ENCODE measurements at regions of chr2 and their contacts with region 1.

Region 1: DNA sequence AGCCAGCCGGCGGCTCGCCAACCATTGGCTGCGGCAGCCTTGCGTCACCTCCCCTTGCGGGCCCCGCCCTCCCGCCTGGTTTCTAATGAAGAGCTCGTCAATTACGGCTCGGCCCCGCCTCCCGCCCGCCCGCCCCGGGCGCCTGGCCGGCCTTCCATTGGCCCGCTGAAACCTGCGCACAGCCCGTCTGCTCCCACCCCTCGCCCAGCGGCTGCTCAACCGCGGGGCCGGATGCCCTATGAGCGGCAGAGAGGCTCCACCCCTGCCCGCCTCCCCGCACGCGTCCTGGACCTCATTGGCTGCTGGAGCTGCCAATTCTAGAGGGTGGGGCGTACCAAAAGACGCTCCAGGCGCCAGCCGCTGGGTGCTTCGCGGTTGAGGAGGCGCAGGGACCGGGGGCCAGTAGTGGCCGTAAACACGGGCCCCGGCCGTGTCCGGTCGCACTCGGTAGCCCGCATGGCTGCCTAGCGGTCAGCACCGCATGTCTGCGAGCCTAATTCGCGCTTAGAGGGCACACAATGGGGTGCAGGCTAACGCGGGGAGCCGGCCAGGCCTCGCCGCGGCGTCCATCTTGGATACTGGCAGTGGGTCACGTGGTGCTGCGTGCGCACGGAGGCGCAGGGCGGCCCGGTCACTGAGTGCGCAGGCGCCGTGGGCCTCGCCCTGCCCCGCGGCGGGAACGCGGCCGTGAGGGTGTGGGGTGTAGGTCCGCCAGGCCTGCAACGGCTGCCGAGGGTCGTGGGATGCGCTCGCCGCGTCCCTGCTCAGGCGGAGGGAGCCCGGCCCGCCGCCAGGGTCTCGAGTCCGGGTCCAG is 454 bp upstream of the HDAC4 start:
- DNase-seq: peak; percentile 98
- ATAC-seq: peak; percentile 96
- H3K4me3 ChIP-seq: peak overlapping the region; percentile 94
- H3K27ac ChIP-seq: peak overlapping the region; percentile 98
- H3K4me1 ChIP-seq: peaks cover 5% of the 10 kb centered on the region; the same call in 1 of the 2 replicates
- H3K27me3 ChIP-seq: no peaks in the 10 kb centered on the region
- CTCF ChIP-seq: no peak
- POLR2A ChIP-seq: peak; percentile 96
- RAD21 ChIP-seq: no peak

Region 2: DNA sequence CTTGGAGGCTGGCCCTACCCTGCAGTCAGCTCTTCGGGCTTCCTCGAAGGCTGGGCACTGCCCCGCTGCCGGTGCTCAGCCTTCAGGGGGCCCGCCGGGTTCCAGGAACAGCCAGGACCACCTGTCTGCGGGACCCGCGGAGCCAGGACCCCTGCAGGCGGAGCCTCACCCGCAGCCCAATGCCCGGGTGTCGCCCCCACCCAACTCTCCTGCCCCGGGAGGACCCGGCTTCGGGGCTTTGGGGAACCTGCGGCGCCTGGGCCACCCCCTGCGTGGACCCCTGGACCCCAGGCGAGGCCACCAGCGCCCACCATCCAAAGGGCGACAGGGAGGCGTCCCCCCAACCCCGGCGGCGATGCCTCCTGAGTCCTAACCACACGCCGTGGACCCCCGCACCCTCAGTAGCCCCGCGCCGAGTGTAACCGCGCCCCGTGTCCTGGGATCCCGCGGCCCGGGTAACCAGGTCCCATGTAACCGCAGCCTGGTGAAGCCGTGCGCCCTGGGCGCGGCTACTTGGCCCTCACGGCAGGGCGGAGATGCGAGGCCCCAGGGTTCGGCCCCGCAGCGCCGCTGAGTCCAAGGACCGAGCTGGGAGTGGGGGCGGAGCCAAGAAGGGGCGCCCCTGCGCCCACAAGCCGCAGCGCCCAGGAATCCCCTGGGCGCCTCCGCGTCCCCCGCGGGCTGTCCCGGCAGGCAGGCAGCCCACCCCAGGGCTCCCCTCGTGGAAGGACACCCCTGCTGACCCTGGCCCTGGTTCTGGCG is 1445.5 kb before region 1 on chr2:
- CTCF ChIA-PET with region 1: no interaction called
- POLR2A ChIA-PET with region 1: no interaction called
- dilution Hi-C with region 1: no loop called
- in situ Hi-C with region 1: no loop called
- intact Hi-C with region 1: no loop called
- DNase-seq: no peak
- ATAC-seq: peak; percentile 85
- H3K4me3 ChIP-seq: peak overlapping the region; percentile 24; the same call in 1 of the 2 replicates
- H3K27ac ChIP-seq: no peak overlapping the region
- H3K4me1 ChIP-seq: peaks cover 2% of the 10 kb centered on the region; the same call in 1 of the 2 replicates
- H3K27me3 ChIP-seq: peaks cover 23% of the 10 kb centered on the region
- CTCF ChIP-seq: no peak
- POLR2A ChIP-seq: no peak
- RAD21 ChIP-seq: no peak

Region 3: GRCh38 chr2:239035361-239036078 is 365.8 kb before region 1 on chr2:
- CTCF ChIA-PET with region 1: no interaction called
- POLR2A ChIA-PET with region 1: no interaction called
- dilution Hi-C with region 1: no loop called
- in situ Hi-C with region 1: no loop called
- intact Hi-C with region 1: loop called (anchors 10 kb)
- DNase-seq: no peak
- ATAC-seq: peak; percentile 99
- H3K4me3 ChIP-seq: no peak overlapping the region
- H3K27ac ChIP-seq: no peak overlapping the region
- H3K4me1 ChIP-seq: no peaks in the 10 kb centered on the region
- H3K27me3 ChIP-seq: peaks cover 12% of the 10 kb centered on the region
- CTCF ChIP-seq: peak; percentile 68
- POLR2A ChIP-seq: no peak
- RAD21 ChIP-seq: peak; percentile 74

Region 4: GRCh38 chr2:239143858-239144718 is 257.2 kb before region 1 on chr2:
- CTCF ChIA-PET with region 1: no interaction called
- POLR2A ChIA-PET with region 1: no interaction called
- dilution Hi-C with region 1: no loop called
- in situ Hi-C with region 1: no loop called
- intact Hi-C with region 1: loop called (anchors 1 kb)
- DNase-seq: peak; percentile 53
- ATAC-seq: peak; percentile 98
- H3K4me3 ChIP-seq: no peak overlapping the region
- H3K27ac ChIP-seq: no peak overlapping the region
- H3K4me1 ChIP-seq: no peaks in the 10 kb centered on the region
- H3K27me3 ChIP-seq: no peaks in the 10 kb centered on the region
- CTCF ChIP-seq: peak; percentile 59
- POLR2A ChIP-seq: no peak
- RAD21 ChIP-seq: peak; percentile 73

Region 5: DNA sequence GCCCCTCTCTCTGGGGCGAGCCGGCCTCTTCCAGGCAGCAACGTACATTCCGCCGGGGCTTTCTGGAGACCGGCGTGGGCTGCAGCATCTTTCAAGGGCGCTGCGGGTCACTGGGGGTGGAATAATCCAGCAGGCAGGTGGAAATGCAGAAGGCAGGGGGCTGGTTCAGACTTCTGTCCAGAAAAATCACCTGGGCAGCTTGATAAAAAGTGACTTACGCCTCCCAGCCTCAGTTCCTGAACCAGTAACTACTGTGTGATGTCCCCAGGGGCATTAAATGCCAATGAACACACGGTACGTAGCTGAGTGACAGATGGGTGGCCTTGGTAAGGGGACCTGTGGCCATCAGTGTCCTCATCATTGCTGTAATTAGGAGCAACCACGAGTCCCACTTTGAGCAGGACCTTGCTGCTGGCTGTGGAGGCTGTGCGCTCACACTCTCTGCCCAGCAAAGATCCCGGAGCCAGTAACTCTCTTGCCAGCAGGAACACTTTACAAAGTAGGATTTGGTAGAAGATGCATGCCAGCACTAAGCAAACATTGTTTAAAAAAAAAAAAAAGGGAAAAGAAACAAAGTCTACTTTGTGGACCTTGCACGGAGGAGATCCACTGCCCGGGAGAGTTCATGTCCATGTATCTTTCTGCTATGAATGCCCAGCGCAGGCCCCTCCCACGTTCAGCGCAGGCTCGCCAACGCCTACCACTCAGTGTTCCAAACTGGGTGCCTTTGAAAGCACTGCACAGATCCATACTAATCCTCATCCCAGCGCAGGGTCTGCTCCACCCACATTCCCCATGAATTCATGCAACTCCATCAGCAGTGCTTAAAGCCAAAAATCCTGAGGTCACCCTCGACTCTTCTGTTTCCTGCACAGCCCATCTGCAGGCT is 177.7 kb before region 1 on chr2:
- CTCF ChIA-PET with region 1: no interaction called
- POLR2A ChIA-PET with region 1: no interaction called
- dilution Hi-C with region 1: no loop called
- in situ Hi-C with region 1: no loop called
- intact Hi-C with region 1: loop called (anchors 10 kb)
- DNase-seq: peak; percentile 53
- ATAC-seq: no peak
- H3K4me3 ChIP-seq: no peak overlapping the region
- H3K27ac ChIP-seq: peak overlapping the region; percentile 24; the same call in 1 of the 2 replicates
- H3K4me1 ChIP-seq: peaks cover 54% of the 10 kb centered on the region
- H3K27me3 ChIP-seq: no peaks in the 10 kb centered on the region
- CTCF ChIP-seq: no peak
- POLR2A ChIP-seq: no peak
- RAD21 ChIP-seq: no peak

Region 6: DNA sequence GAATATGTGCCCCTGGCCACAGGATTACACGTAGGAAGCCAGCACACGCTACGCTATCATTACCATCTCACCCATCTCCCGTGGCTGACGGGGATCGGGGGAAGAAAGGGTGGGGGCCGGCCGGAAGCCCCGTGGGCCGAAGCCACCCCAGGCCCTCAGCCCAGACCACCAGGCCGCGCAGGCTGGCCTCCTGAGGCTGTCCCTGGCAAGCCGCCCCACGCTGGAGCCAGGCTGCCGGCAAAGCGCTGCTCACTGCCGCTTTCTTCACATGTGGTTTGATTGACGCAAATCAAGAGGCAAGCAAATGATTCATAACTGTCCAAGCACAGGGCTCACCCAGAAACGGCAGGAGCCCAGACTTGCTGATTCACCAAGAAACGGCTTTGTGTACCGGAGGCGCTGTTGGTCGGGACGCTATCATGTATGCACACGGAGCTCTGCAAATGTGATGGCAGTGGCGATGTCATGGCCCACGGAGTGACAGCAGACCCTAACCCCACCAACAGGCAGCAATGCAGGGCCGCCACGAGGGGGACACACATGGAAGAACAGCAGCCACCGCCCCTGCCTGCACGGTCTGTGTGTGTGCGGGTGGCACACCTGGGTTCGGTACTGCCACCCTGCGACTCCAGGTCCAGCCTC is 126.1 kb before region 1 on chr2:
- CTCF ChIA-PET with region 1: no interaction called
- POLR2A ChIA-PET with region 1: no interaction called
- dilution Hi-C with region 1: no loop called
- in situ Hi-C with region 1: loop called (anchors 10 kb)
- intact Hi-C with region 1: no loop called
- DNase-seq: peak; percentile 98
- ATAC-seq: peak; percentile 66
- H3K4me3 ChIP-seq: no peak overlapping the region
- H3K27ac ChIP-seq: peak overlapping the region; percentile 81
- H3K4me1 ChIP-seq: peaks cover 53% of the 10 kb centered on the region
- H3K27me3 ChIP-seq: no peaks in the 10 kb centered on the region
- CTCF ChIP-seq: peak; percentile 14; the same call in 1 of the 2 replicates
- POLR2A ChIP-seq: peak; percentile 6; the same call in 1 of the 2 replicates
- RAD21 ChIP-seq: peak; percentile 27

Region 7: GRCh38 chr2:239328351-239329191 is 72.7 kb before region 1 on chr2:
- CTCF ChIA-PET with region 1: no interaction called
- POLR2A ChIA-PET with region 1: no interaction called
- dilution Hi-C with region 1: no loop called
- in situ Hi-C with region 1: no loop called
- intact Hi-C with region 1: loop called (anchors 2 kb)
- DNase-seq: peak; percentile 98
- ATAC-seq: peak; percentile 84
- H3K4me3 ChIP-seq: no peak overlapping the region
- H3K27ac ChIP-seq: peak overlapping the region; percentile 97
- H3K4me1 ChIP-seq: peaks cover 46% of the 10 kb centered on the region
- H3K27me3 ChIP-seq: no peaks in the 10 kb centered on the region
- CTCF ChIP-seq: peak; percentile 26; the same call in 1 of the 2 replicates
- POLR2A ChIP-seq: peak; percentile 73; the same call in 1 of the 2 replicates
- RAD21 ChIP-seq: peak; percentile 40

Measured in IMR-90 (cell line).